ENCODE measurements at regions of chr2 and their contacts with region 1.

Region 1: DNA sequence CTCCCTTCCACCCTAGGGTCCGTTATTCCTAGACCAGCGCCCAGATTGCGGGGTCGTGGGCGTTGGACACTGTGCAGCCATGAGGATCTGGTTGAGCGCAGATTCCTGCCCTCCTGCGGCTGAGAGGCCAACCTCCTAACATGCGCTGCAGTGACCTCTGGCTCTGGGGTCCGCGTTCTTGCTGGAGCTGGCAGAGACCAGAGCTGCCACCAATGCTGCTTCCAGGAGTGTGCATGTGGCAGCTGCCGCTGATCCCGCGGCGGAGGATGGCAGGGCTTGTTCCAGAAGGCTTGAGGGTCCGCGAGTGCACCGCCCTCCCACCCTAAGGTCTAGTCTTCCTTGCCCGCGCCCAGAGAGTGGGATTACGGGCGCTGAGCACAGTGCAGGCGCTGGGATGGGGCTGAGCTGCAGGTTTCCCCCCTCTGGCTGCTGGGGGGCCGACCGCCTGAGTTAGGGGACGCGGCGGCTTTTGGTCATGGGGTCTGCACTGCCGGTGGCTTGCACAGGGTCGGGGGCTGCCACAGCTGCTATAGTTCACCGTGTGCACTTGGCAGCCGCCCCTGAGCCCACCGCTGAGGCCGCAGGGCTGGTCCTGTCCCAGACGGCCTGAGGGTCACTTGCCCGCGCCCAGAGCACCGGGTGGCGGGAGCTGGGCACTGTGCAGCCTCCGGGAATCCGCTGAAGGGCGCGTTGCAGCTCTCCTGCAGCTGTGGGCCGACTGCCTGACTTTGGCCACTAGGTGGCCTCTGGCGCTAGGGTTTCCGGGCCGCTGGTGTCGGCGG is 145.9 kb downstream of the CCDC74A start:
- DNase-seq: peak; percentile 90
- H3K4me3 ChIP-seq: peak overlapping the region; percentile 24 to 43
- H3K27ac ChIP-seq: no peak overlapping the region
- H3K4me1 ChIP-seq: peaks cover 35% of the 10 kb centered on the region
- H3K27me3 ChIP-seq: no peaks in the 10 kb centered on the region
- CTCF ChIP-seq: peak; percentile 83 to 94 (median 90)
- POLR2A ChIP-seq: no peak

Region 2: GRCh38 chr2:131413148-131413747 is 260.3 kb before region 1 on chr2:
- intact Hi-C with region 1: loop called (anchors 10 kb)
- DNase-seq: peak; percentile 48
- H3K4me3 ChIP-seq: no peak overlapping the region
- H3K27ac ChIP-seq: peak overlapping the region in 1 of 2 donors; percentile 7
- H3K4me1 ChIP-seq: no peaks in the 10 kb centered on the region
- H3K27me3 ChIP-seq: no peaks in the 10 kb centered on the region
- CTCF ChIP-seq: peak; percentile 77 to 92 (median 89)
- POLR2A ChIP-seq: no peak

Region 3: GRCh38 chr2:131535526-131535925 is 138.1 kb before region 1 on chr2:
- intact Hi-C with region 1: no loop called
- DNase-seq: peak; percentile 12
- H3K4me3 ChIP-seq: no peak overlapping the region
- H3K27ac ChIP-seq: no peak overlapping the region
- H3K4me1 ChIP-seq: no peaks in the 10 kb centered on the region
- H3K27me3 ChIP-seq: no peaks in the 10 kb centered on the region
- CTCF ChIP-seq: no peak
- POLR2A ChIP-seq: no peak

Region 4: GRCh38 chr2:131801210-131801744 is 127.7 kb after region 1 on chr2:
- intact Hi-C with region 1: loop called (anchors 10 kb)
- DNase-seq: no peak
- H3K4me3 ChIP-seq: peak overlapping the region; percentile 57 to 64
- H3K27ac ChIP-seq: no peak overlapping the region
- H3K4me1 ChIP-seq: no peaks in the 10 kb centered on the region
- H3K27me3 ChIP-seq: no peaks in the 10 kb centered on the region
- CTCF ChIP-seq: no peak
- POLR2A ChIP-seq: no peak

Measured in testis (tissue), 5 donors.